B cell (primary cell): ENCODE measurements at regions of chr5 and their contacts with region 1.

Region 1: DNA sequence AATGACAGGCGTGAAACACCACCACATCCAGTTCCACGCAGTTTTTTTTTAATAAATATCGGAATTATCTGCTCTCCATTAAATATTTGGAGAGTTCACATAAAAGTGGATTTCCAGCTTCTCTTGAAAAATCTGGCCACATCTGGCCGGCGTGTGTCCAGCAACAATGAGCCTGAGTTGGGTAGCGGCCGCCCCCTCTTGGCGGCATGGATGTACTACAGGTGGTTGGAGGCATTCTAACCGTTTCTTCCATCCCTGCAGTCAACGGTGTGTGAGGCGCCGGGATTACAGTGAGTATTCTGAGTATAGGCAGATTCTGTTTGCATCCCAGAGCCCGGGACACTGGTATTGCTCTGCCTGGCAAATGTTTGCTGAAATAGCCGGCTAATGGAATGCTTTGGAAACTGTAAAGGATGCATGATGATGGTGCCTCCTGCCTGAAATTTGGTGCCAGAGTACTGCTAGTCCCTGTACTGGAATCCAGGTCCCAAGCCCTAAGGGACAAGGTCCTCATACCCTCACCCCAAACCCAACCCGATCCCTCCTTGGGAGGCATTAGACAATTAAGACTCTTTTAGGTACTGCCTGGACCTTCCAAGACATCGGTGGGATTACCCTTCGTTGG is 13.6 kb upstream of the GM2A start:
- DNase-seq: peak; percentile 66
- ATAC-seq: peak; percentile 64
- H3K4me3 ChIP-seq: peak overlapping the region in 2 of 5 experiments; percentile 7 to 20
- H3K4me3 Mint-ChIP-seq: peak overlapping the region; percentile 84
- H3K27ac ChIP-seq: no peak overlapping the region
- H3K27ac Mint-ChIP-seq: peak overlapping the region; percentile 82
- H3K4me1 ChIP-seq: peaks cover 81 to 82% of the 10 kb centered on the region in 2 donors
- H3K4me1 Mint-ChIP-seq: peaks cover 95% of the 10 kb centered on the region
- H3K27me3 ChIP-seq: no peaks in the 10 kb centered on the region
- H3K27me3 Mint-ChIP-seq: no peaks in the 10 kb centered on the region
- CTCF ChIP-seq: peak; percentile 99

Region 2: GRCh38 chr5:151141535-151141934 is 97.8 kb before region 1 on chr5:
- CTCF ChIA-PET with region 1: interaction called, 12 read pairs
- POLR2A ChIA-PET with region 1: interaction called, 3 read pairs
- intact Hi-C with region 1: no loop called
- DNase-seq: peak; percentile 75
- ATAC-seq: peak; percentile 95
- H3K4me3 ChIP-seq: peak overlapping the region in 4 of 5 experiments; percentile 36 to 70 (median 52)
- H3K4me3 Mint-ChIP-seq: peak overlapping the region; percentile 83
- H3K27ac ChIP-seq: peak overlapping the region; percentile 79 to 91
- H3K27ac Mint-ChIP-seq: peak overlapping the region; percentile 91
- H3K4me1 ChIP-seq: peaks cover 63 to 87% of the 10 kb centered on the region in 2 donors
- H3K4me1 Mint-ChIP-seq: peaks cover 82% of the 10 kb centered on the region
- H3K27me3 ChIP-seq: no peaks in the 10 kb centered on the region
- H3K27me3 Mint-ChIP-seq: no peaks in the 10 kb centered on the region
- CTCF ChIP-seq: no peak

Region 3: DNA sequence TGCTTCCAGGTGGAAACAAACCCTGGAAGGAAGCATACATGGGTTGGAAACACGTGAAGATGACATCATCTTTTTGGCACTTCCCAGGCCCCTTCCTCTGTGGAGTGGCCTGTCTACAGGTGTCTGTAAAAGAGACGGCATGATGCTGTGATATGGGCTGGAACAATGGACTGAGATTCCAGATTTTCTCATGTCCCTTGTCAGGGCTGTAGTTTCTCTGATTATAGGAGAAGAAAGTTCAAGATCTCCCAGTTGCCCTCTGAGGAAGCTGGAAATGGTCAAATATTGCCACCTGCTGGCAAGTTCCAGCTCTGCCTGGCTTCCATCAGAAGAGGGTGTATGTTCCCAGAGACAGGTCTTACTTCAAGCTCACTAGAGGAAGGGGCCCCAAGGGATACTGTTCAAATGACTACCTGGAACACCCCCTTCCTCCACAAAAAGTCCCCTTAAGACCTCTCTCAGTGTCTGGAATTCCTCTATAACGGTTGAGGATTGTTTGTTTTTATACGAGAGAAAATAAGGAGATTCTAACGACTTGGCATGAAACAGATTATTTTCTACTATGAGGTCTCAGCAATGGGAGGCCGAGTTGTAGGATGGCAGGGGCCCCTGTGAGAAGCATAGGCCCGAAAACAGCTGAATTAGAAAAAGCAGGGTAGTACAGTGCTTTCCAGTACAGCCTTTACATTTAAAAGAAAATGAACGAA is 74.5 kb before region 1 on chr5:
- CTCF ChIA-PET with region 1: interaction called, 265 read pairs
- POLR2A ChIA-PET with region 1: interaction called, 11 read pairs
- intact Hi-C with region 1: loop called (anchors 1 kb)
- DNase-seq: peak; percentile 89
- ATAC-seq: peak; percentile 97
- H3K4me3 ChIP-seq: no peak overlapping the region
- H3K4me3 Mint-ChIP-seq: no peak overlapping the region
- H3K27ac ChIP-seq: no peak overlapping the region
- H3K27ac Mint-ChIP-seq: peak overlapping the region; percentile 72
- H3K4me1 ChIP-seq: peaks cover 21 to 28% of the 10 kb centered on the region in 2 donors
- H3K4me1 Mint-ChIP-seq: peaks cover 36% of the 10 kb centered on the region
- H3K27me3 ChIP-seq: no peaks in the 10 kb centered on the region
- H3K27me3 Mint-ChIP-seq: no peaks in the 10 kb centered on the region
- CTCF ChIP-seq: peak; percentile 95

Region 4: DNA sequence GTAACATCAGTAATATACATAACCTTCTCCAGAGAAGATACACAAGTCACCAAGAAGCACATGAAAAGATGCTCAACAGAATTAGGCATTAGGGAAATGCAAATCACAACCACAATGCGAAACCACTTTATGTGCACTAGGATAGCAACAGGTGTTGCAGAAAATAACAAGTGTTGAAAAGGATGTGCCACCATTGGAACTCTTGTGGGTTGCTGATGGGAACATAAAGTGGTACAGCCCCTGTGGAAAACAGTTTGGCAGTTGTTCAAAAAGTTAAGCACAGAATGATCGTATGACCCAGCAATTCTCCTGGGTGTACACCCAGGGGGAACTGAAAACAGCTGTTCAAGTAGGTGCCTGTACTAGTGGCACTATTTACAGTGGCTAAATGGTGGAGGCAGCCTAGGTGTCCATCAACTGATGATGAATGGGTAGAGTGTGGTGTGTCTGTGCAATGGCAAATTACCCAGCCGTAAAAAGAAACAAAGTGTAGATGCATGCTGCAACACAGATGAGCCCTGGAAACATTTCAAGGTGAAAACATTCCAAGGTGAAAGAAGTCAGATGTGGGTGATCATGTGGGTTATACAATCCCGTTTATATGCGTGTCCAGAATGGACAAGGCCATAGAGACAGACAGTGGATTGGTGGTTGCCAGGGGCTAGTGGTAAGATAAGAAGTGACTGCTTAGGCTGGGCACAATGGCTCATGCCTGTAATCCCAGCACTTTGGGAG is 42.6 kb before region 1 on chr5:
- CTCF ChIA-PET with region 1: interaction called, 12 read pairs
- POLR2A ChIA-PET with region 1: no interaction called
- intact Hi-C with region 1: loop called (anchors 1 kb)
- DNase-seq: peak; percentile 82
- ATAC-seq: peak; percentile 95
- H3K4me3 ChIP-seq: no peak overlapping the region
- H3K4me3 Mint-ChIP-seq: peak overlapping the region; percentile 67
- H3K27ac ChIP-seq: peak overlapping the region; percentile 61 to 67
- H3K27ac Mint-ChIP-seq: peak overlapping the region; percentile 97
- H3K4me1 ChIP-seq: peaks cover 41 to 55% of the 10 kb centered on the region in 2 donors
- H3K4me1 Mint-ChIP-seq: peaks cover 63% of the 10 kb centered on the region
- H3K27me3 ChIP-seq: no peaks in the 10 kb centered on the region
- H3K27me3 Mint-ChIP-seq: no peaks in the 10 kb centered on the region
- CTCF ChIP-seq: no peak

Region 5: DNA sequence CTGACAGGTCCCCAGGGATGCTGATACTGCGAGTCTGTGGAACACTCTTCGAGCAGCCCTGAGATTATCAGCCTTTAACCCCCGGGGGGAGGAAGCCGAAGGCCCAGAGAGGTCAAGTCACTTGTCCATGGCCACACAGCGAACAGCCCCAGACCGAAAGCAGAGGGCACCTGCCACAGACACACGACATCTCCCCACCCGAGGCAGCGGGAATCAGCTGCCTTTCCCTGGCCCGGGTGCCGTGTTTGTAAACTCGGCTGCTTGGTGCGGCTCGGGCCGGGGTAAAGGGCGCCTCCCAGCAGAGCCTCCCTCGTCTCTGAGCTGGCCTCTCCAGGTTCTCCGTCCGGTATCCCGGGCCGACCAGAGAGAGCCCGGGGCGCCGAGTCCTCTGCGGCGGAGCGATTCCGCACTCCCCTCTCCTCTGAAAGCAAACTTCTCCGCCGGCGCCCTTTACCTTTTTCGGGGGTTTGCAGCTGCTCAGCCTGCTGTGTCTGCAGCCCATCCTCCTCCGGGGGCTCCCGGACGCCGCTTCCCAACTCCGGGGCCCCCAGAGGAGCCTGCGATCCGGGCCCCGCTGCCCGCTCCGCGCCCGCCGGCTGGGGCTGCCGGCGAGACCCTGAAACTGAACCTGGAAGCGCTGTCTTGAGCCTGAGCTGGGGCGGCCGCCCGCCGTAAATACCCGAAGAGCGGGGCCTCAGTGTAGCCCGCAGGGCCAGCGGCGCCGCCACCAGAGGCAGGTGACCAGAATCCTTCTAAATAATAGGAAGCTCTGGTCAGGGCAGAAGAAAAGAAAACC is 15.7 kb before region 1 on chr5 and contains the start of gene CCDC69:
- CTCF ChIA-PET with region 1: interaction called, 299 read pairs
- POLR2A ChIA-PET with region 1: interaction called, 14 read pairs
- intact Hi-C with region 1: loop called (anchors 1 kb)
- DNase-seq: peak; percentile 75
- ATAC-seq: peak; percentile 42
- H3K4me3 ChIP-seq: peak within 1 kb of the TSS; percentile 70 to 86 (median 80)
- H3K4me3 Mint-ChIP-seq: peak within 1 kb of the TSS; percentile 88
- H3K27ac ChIP-seq: peak within 1 kb of the TSS; percentile 94 to 99
- H3K27ac Mint-ChIP-seq: peak within 1 kb of the TSS; percentile 92
- H3K4me1 ChIP-seq: peaks cover 64 to 75% of the 10 kb centered on the region in 2 donors
- H3K4me1 Mint-ChIP-seq: peaks cover 71% of the 10 kb centered on the region
- H3K27me3 ChIP-seq: no peaks in the 10 kb centered on the region
- H3K27me3 Mint-ChIP-seq: no peaks in the 10 kb centered on the region
- CTCF ChIP-seq: no peak
- total RNA-seq, gene CCDC69: 125 and 129 TPM in 2 replicates